GM10248 (cell line): ENCODE measurements at regions of chr4 and their contacts with region 1.

Region 1: DNA sequence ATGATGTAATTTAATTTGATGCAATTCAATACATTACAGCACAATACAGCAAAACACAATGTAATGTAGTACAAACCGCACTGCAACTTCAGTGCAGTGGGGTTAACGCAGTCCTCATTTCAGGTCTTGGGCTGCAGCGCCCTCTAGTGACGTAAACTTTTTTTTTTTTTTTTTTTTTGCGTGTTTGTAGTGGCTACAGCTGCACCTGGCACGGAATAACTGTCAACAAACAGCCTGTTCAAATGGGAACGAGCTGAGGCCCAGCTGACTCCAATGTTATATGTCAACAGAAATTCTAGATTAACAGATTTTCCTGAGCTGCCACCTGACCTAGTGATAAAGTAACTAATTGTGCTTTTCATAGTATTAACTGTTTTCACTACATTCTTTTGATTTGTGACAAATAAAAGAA is 33.5 kb upstream of the RASSF6 start:
- DNase-seq: peak; percentile 43
- CTCF ChIP-seq: peak; percentile 16

Region 2: GRCh38 chr4:73311428-73311827 is 342.3 kb before region 1 on chr4:
- CTCF ChIA-PET with region 1: interaction called, 19 read pairs
- POLR2A ChIA-PET with region 1: no interaction called
- DNase-seq: no peak
- CTCF ChIP-seq: no peak

Region 3: DNA sequence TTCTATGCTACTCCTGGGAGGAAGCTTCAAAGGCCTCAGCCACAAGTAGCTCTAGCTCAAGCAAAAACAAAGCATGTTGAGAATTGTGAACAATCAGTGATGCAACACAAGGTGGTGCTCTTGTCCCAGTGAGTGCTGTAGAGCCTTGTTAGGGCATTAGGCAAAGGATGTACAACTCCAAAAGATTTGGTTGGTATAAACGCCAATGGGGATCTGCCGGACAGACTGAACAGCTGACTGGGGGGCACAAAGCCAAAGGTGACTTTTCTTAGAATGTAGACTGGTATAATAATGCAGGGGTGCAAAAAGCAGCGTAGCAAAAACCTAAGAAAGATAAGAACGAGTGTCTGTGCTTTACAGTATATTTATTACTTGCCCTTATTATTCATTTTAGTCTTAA is 312.2 kb before region 1 on chr4:
- CTCF ChIA-PET with region 1: interaction called, 29 read pairs
- POLR2A ChIA-PET with region 1: no interaction called
- DNase-seq: peak; percentile 38
- CTCF ChIP-seq: peak; percentile 55

Region 4: GRCh38 chr4:73573794-73574406 is 79.8 kb before region 1 on chr4:
- CTCF ChIA-PET with region 1: interaction called, 115 read pairs
- POLR2A ChIA-PET with region 1: no interaction called
- DNase-seq: peak; percentile 45
- CTCF ChIP-seq: peak; percentile 86

Region 5: GRCh38 chr4:73583666-73584065 is 70.0 kb before region 1 on chr4:
- CTCF ChIA-PET with region 1: interaction called, 10 read pairs
- POLR2A ChIA-PET with region 1: no interaction called
- DNase-seq: no peak
- CTCF ChIP-seq: no peak

Region 6: GRCh38 chr4:73593631-73594241 is 60.0 kb before region 1 on chr4:
- CTCF ChIA-PET with region 1: interaction called, 18 read pairs
- POLR2A ChIA-PET with region 1: no interaction called
- DNase-seq: no peak
- CTCF ChIP-seq: peak; percentile 33

Region 7: GRCh38 chr4:73853246-73853704 is 199.6 kb after region 1 on chr4 and contains the start of gene PF4V1:
- CTCF ChIA-PET with region 1: no interaction called
- POLR2A ChIA-PET with region 1: no interaction called
- DNase-seq: no peak
- CTCF ChIP-seq: no peak